Common myeloid progenitor, CD34-positive (primary cell): ENCODE measurements at regions of chr10 and their contacts with region 1.

Region 1: DNA sequence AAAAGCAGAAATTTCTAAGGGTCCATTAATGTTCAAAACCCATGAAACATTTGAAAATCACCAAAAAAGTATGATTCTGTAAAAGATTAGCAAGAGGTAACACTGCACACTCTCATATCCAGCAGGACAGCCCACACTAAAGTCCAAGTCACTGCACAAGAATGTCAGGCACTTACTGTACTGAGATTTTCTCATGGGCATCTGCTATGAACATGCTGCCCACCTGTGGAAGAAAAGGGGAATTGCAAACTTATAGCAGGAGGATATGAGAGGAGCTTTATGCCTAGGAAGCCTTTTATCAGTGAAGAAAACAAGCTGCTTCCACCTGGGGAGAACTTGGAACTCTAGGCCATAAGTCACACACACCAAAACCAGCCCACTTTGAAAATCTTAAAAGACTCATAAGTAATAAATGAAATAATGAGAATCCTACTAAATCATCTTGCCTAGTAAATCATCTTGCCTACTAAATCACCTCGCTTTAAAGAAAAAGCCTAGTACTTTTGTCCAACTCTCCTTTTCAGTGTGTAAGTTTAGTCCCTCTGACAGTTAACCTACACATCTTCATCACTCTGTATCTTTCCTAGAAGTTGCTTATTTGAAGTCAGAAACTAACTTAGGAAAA is 46.1 kb downstream of the ARMH3 start:
- DNase-seq: peak; percentile 64 to 85 (median 81)
- H3K4me3 ChIP-seq: no peak overlapping the region
- H3K27ac ChIP-seq: no peak overlapping the region
- H3K4me1 ChIP-seq: peaks cover 0 to 9% (median 5%) of the 10 kb centered on the region in 4 experiments
- H3K27me3 ChIP-seq: no peaks in the 10 kb centered on the region

Region 2: DNA sequence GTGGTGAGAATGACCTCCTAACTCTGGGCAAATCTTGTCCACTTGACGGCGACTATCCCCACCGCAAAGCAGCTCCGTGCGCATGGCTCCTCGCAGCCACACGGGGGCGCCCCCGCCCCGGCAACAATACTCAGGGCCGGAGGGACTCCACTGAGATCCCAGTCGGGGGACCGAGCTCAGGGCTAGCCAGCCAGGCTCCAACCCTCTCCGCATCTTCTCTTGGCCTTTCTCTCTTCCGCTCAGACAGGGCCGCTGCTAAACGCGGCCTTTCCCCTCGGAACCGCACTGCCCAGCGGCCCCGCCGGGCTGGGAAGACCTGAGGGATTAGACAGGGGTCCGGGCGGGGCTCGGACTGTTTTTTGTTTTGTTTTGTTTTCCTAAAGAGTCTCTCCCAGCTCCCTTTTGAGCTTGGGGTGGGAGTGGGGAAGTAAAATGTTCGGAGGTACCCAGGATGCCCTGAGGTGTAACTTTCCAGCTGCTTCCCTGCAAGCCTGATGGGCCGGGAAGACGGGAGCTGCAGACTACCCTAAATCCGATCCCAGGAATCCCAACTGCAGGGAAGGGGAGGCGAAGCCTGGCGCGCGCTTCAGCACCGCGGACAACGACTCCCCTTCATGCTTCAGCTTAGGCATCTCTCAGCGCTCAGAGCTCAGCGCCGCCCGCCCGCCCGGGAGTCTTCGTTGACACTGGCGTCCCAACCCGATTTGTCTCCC is 169.0 kb before region 1 on chr10:
- CTCF ChIA-PET with region 1: interaction called, 89 read pairs
- POLR2A ChIA-PET with region 1: no interaction called
- DNase-seq: peak; percentile 74 to 90 (median 87)
- H3K4me3 ChIP-seq: peak overlapping the region in 6 of 7 experiments; percentile 21 to 72 (median 52)
- H3K27ac ChIP-seq: no peak overlapping the region
- H3K4me1 ChIP-seq: peaks cover 5 to 36% (median 30%) of the 10 kb centered on the region in 4 experiments
- H3K27me3 ChIP-seq: peaks cover 0 to 23% (median 2%) of the 10 kb centered on the region in 5 experiments

Region 3: GRCh38 chr10:101848894-101849351 is 161.0 kb before region 1 on chr10:
- CTCF ChIA-PET with region 1: interaction called, 13 read pairs
- POLR2A ChIA-PET with region 1: no interaction called
- DNase-seq: peak in 2 of 3 donors; percentile 31
- H3K4me3 ChIP-seq: no peak overlapping the region
- H3K27ac ChIP-seq: no peak overlapping the region
- H3K4me1 ChIP-seq: peaks cover 7 to 27% (median 15%) of the 10 kb centered on the region in 4 experiments
- H3K27me3 ChIP-seq: no peaks in the 10 kb centered on the region

Region 4: DNA sequence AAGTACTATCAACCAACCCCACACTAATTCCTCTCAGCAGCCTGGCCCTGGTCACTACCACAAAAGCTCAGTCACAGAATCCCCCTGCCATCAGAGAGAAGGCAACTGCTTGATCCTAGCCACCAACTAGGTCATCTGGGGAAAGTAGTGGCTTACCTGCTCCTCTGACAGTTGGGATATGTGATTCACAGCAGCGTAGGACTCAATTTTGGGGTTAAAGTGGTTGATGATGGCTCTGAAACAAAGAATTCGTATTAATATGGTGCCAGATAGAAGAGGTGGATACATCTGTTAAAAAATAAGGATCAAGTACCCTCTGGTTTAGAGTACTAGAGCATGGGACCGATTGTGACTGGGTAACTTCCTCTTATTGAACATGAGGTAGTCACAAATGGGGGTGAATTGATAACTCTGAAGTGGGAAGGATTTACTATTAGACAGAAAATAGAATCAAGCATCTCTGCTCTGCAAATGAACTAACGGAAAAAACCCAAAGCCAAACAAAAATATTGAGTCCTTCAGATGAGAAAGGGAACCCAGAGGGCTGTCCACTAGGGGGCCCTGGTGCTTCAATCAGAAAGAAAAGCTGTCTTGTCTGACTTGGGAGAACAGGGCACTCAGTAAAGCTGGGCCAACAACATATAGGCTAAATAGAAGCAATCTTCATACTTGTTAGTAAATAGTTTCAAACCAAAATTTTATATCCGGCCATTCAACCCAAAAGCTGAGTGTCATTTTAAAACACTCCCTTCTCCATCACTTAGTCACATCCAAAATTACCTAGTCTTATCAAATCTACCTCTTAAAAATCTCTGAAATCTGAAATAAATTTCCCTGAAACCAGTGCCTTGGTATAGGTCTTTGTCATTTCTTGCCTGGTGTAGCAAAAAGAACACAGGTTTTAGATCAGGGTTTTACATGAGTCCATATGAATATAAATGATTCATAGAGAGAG is 120.4 kb before region 1 on chr10:
- CTCF ChIA-PET with region 1: interaction called, 50 read pairs
- POLR2A ChIA-PET with region 1: no interaction called
- DNase-seq: peak; percentile 59 to 77 (median 71)
- H3K4me3 ChIP-seq: no peak overlapping the region
- H3K27ac ChIP-seq: no peak overlapping the region
- H3K4me1 ChIP-seq: no peaks in the 10 kb centered on the region
- H3K27me3 ChIP-seq: no peaks in the 10 kb centered on the region

Region 5: DNA sequence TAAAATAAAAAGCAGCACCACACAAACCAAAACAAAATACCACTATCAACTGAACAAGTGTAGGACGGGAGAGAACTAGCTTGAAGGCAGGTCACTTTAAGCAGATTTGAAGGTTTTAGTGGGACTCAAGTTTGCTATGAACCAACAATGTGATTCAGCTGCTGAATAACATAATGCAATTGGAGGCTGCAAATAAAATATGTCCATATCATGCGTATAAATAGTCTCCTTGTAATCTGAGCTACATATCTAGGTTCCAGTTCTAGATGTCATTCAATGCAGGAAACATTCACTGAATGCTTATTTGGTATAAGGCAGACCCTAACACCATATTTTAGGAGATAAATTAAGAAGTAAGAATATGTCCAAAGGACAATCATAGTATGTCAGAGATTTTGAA is 84.9 kb before region 1 on chr10:
- CTCF ChIA-PET with region 1: no interaction called
- POLR2A ChIA-PET with region 1: no interaction called
- DNase-seq: no peak
- H3K4me3 ChIP-seq: no peak overlapping the region
- H3K27ac ChIP-seq: no peak overlapping the region
- H3K4me1 ChIP-seq: no peaks in the 10 kb centered on the region
- H3K27me3 ChIP-seq: no peaks in the 10 kb centered on the region

Region 6: DNA sequence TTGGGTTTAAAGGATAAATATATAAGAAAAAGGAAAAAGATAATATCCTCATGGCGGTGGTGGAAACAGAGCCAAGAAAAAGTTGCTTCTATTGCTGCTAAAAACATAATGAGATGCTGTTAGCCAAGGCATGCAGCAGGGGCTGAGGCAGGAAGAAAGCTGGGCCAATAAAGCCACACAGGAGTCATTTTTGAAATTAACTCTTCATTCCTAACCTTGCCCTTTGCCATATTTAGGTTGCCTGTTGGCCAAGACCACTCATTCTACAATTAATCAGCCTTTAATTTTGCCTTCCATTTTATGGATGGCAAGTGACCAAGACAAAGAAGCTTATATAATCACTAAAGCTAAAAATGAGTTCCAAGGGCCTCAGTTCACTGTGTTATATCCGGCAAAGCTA is 12.1 kb before region 1 on chr10:
- CTCF ChIA-PET with region 1: interaction called, 28 read pairs
- POLR2A ChIA-PET with region 1: interaction called, 4 read pairs
- DNase-seq: no peak
- H3K4me3 ChIP-seq: no peak overlapping the region
- H3K27ac ChIP-seq: no peak overlapping the region
- H3K4me1 ChIP-seq: no peaks in the 10 kb centered on the region
- H3K27me3 ChIP-seq: no peaks in the 10 kb centered on the region

Region 7: GRCh38 chr10:102020938-102021337 is 11.0 kb after region 1 on chr10:
- CTCF ChIA-PET with region 1: interaction called, 22 read pairs
- POLR2A ChIA-PET with region 1: no interaction called
- DNase-seq: no peak
- H3K4me3 ChIP-seq: no peak overlapping the region
- H3K27ac ChIP-seq: no peak overlapping the region
- H3K4me1 ChIP-seq: peaks cover 0 to 10% (median 4%) of the 10 kb centered on the region in 4 experiments
- H3K27me3 ChIP-seq: no peaks in the 10 kb centered on the region

Region 8: DNA sequence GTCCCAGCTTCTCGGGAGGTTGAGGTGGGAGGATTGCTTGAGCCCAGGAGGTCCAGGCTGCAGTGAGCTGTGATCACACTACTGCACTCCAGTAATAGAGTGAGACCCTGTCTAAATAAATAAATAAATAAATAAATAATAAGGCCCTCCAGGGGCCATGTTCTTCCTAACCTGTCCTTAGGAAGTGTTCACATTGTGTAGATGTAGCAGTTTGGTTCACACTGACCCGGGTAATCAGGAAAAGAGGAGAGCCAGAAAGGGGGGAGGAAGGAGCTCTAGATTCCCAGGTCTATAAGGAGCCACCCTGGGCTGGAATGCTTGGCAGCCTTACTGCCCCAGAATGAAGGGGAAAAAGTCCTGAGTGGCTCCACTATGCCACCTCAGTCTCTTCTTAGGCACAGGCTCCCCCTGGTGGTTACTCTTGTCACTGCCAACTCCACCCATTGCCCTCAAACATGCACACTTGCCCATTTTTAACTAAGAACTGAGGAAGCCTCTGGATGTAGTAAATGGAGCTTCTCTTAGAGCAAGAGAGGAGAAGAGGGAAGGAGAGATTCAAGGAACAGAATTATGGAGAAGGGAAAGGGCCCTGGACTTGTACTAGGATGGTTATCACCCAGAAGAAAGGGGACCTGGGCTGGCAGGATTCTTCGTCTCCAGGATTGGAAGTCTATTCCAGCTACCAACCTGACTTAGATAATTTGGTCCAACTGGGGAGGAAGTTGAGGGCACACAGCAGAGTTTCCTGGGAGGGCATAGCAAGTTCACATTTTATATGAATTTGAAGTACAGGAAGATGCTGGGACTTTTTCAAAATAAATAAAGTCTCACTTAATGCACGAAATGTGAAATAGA is 63.0 kb after region 1 on chr10:
- CTCF ChIA-PET with region 1: interaction called, 16 read pairs
- POLR2A ChIA-PET with region 1: no interaction called
- DNase-seq: peak; percentile 79 to 90 (median 83)
- H3K4me3 ChIP-seq: no peak overlapping the region
- H3K27ac ChIP-seq: no peak overlapping the region
- H3K4me1 ChIP-seq: peaks cover 3 to 15% (median 5%) of the 10 kb centered on the region in 4 experiments
- H3K27me3 ChIP-seq: no peaks in the 10 kb centered on the region